Activated CD8-positive, alpha-beta T cell treated with anti-CD3 and anti-CD28 coated beads for 36 hours (primary cell): ENCODE measurements at regions of chr10 and their contacts with region 1.

Region 1: GRCh38 chr10:69092959-69093850 is 5.3 kb downstream of the SRGN start:
- DNase-seq: peak; percentile 94
- ATAC-seq: peak; percentile 26
- H3K4me3 Mint-ChIP-seq: peak overlapping the region; percentile 24
- H3K27ac Mint-ChIP-seq: peak overlapping the region; percentile 68
- H3K4me1 Mint-ChIP-seq: peaks cover 52% of the 10 kb centered on the region
- H3K27me3 Mint-ChIP-seq: peaks cover 1% of the 10 kb centered on the region
- CTCF ChIP-seq: peak; percentile 80

Region 2: GRCh38 chr10:68489919-68490318 is 603.3 kb before region 1 on chr10:
- CTCF ChIA-PET with region 1: no interaction called
- POLR2A ChIA-PET with region 1: no interaction called
- intact Hi-C with region 1: no loop called
- DNase-seq: no peak
- ATAC-seq: no peak
- H3K4me3 Mint-ChIP-seq: no peak overlapping the region
- H3K27ac Mint-ChIP-seq: no peak overlapping the region
- H3K4me1 Mint-ChIP-seq: no peaks in the 10 kb centered on the region
- H3K27me3 Mint-ChIP-seq: no peaks in the 10 kb centered on the region
- CTCF ChIP-seq: no peak

Region 3: GRCh38 chr10:69014171-69014570 is 79.0 kb before region 1 on chr10:
- CTCF ChIA-PET with region 1: interaction called, 17 read pairs
- POLR2A ChIA-PET with region 1: interaction called, 3 read pairs
- intact Hi-C with region 1: no loop called
- DNase-seq: no peak
- ATAC-seq: no peak
- H3K4me3 Mint-ChIP-seq: no peak overlapping the region
- H3K27ac Mint-ChIP-seq: no peak overlapping the region
- H3K4me1 Mint-ChIP-seq: peaks cover 9% of the 10 kb centered on the region
- H3K27me3 Mint-ChIP-seq: no peaks in the 10 kb centered on the region
- CTCF ChIP-seq: no peak

Region 4: DNA sequence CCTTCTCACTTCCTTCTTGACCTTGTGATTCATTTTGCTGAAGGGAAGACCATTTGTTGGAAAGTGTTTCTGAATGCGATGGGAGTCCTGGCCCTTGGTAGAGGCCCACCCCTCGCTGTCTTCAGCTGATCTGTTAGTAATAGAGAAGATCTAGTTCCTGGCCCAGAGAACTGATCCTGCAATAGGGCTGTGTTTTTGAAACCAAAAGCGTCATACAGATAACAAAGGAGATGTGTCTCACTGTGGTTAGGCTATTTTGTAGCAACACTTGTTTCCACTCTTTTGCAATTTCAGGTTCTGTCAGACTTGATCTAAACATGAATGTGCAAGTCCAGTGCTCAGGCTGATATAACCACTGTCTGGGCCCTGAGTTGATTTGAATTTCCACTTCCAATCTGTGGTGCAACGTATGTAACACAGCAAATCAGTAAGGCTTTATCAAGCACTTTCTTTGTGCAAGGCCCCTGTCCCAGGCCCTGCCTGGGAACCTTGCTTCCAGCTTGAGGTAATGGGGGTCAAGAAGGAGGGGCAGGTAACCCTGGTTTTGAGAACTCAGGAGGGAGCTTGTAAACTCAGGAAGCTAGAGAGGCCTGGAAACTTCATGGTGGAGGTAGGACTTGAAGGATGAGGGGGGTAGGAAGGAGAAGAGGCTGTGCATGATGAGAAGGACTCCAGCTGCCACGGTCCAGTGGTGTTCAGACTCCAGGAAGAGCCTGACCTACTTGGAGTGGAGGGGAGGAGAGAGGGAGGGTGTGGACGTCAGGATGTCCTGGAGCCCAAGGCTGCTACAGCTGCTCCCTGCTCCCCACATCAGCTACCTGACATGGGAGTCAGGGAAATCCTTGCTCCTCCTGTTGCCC is 47.5 kb before region 1 on chr10:
- CTCF ChIA-PET with region 1: interaction called, 13 read pairs
- POLR2A ChIA-PET with region 1: interaction called, 77 read pairs
- intact Hi-C with region 1: loop called (anchors 2 kb)
- DNase-seq: peak; percentile 56
- ATAC-seq: peak; percentile 75
- H3K4me3 Mint-ChIP-seq: peak overlapping the region; percentile 42
- H3K27ac Mint-ChIP-seq: peak overlapping the region; percentile 94
- H3K4me1 Mint-ChIP-seq: peaks cover 40% of the 10 kb centered on the region
- H3K27me3 Mint-ChIP-seq: no peaks in the 10 kb centered on the region
- CTCF ChIP-seq: no peak

Region 5: GRCh38 chr10:69061305-69062161 is 31.7 kb before region 1 on chr10:
- CTCF ChIA-PET with region 1: interaction called, 18 read pairs
- POLR2A ChIA-PET with region 1: interaction called, 52 read pairs
- intact Hi-C with region 1: no loop called
- DNase-seq: peak; percentile 35
- ATAC-seq: peak; percentile 35
- H3K4me3 Mint-ChIP-seq: peak overlapping the region; percentile 53
- H3K27ac Mint-ChIP-seq: peak overlapping the region; percentile 81
- H3K4me1 Mint-ChIP-seq: peaks cover 51% of the 10 kb centered on the region
- H3K27me3 Mint-ChIP-seq: no peaks in the 10 kb centered on the region
- CTCF ChIP-seq: no peak

Region 6: DNA sequence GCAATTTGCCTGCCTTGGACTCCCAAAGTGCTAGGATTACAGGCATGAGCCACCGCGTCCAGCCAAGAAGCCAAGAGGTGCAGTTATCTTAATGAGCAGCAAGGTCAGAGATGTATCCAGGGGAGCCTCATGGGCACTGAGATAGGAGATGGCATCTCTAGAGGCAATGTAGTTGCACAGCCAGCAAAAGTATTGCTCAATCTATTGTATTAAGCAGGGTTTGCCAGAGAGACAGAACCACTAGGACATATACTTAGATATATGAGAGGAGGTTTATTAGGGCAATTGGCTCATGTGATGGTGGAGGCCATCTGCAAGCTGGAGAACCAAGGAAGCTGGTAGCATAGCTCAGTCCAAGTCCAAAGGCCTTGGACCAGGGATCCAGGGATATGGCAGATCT is 14.5 kb after region 1 on chr10:
- CTCF ChIA-PET with region 1: interaction called, 12 read pairs
- POLR2A ChIA-PET with region 1: interaction called, 27 read pairs
- intact Hi-C with region 1: no loop called
- DNase-seq: no peak
- ATAC-seq: no peak
- H3K4me3 Mint-ChIP-seq: no peak overlapping the region
- H3K27ac Mint-ChIP-seq: no peak overlapping the region
- H3K4me1 Mint-ChIP-seq: peaks cover 3% of the 10 kb centered on the region
- H3K27me3 Mint-ChIP-seq: no peaks in the 10 kb centered on the region
- CTCF ChIP-seq: no peak

Region 7: GRCh38 chr10:69123747-69124562 is 30.8 kb after region 1 on chr10 and contains the start of gene VPS26A:
- CTCF ChIA-PET with region 1: interaction called, 10 read pairs
- POLR2A ChIA-PET with region 1: interaction called, 10 read pairs
- intact Hi-C with region 1: loop called (anchors 5 kb)
- DNase-seq: peak; percentile 99
- ATAC-seq: peak; percentile 98
- H3K4me3 Mint-ChIP-seq: peak within 1 kb of the TSS; percentile 86
- H3K27ac Mint-ChIP-seq: peak within 1 kb of the TSS; percentile 90
- H3K4me1 Mint-ChIP-seq: peaks cover 23% of the 10 kb centered on the region
- H3K27me3 Mint-ChIP-seq: no peaks in the 10 kb centered on the region
- CTCF ChIP-seq: peak; percentile 5
- total RNA-seq, gene VPS26A: 33.1 to 34.5 TPM

Region 8: GRCh38 chr10:69151984-69152383 is 58.8 kb after region 1 on chr10:
- CTCF ChIA-PET with region 1: no interaction called
- POLR2A ChIA-PET with region 1: no interaction called
- intact Hi-C with region 1: no loop called
- DNase-seq: peak; percentile 7
- ATAC-seq: no peak
- H3K4me3 Mint-ChIP-seq: no peak overlapping the region
- H3K27ac Mint-ChIP-seq: no peak overlapping the region
- H3K4me1 Mint-ChIP-seq: peaks cover 17% of the 10 kb centered on the region
- H3K27me3 Mint-ChIP-seq: no peaks in the 10 kb centered on the region
- CTCF ChIP-seq: no peak

Region 9: GRCh38 chr10:69213591-69214311 is 120.5 kb after region 1 on chr10:
- CTCF ChIA-PET with region 1: no interaction called
- POLR2A ChIA-PET with region 1: no interaction called
- intact Hi-C with region 1: no loop called
- DNase-seq: no peak
- ATAC-seq: peak; percentile 17
- H3K4me3 Mint-ChIP-seq: no peak overlapping the region
- H3K27ac Mint-ChIP-seq: no peak overlapping the region
- H3K4me1 Mint-ChIP-seq: peaks cover 32% of the 10 kb centered on the region
- H3K27me3 Mint-ChIP-seq: no peaks in the 10 kb centered on the region
- CTCF ChIP-seq: no peak